KBM-7 (cell line): ENCODE measurements at regions of chr17 and their contacts with region 1.

Region 1: DNA sequence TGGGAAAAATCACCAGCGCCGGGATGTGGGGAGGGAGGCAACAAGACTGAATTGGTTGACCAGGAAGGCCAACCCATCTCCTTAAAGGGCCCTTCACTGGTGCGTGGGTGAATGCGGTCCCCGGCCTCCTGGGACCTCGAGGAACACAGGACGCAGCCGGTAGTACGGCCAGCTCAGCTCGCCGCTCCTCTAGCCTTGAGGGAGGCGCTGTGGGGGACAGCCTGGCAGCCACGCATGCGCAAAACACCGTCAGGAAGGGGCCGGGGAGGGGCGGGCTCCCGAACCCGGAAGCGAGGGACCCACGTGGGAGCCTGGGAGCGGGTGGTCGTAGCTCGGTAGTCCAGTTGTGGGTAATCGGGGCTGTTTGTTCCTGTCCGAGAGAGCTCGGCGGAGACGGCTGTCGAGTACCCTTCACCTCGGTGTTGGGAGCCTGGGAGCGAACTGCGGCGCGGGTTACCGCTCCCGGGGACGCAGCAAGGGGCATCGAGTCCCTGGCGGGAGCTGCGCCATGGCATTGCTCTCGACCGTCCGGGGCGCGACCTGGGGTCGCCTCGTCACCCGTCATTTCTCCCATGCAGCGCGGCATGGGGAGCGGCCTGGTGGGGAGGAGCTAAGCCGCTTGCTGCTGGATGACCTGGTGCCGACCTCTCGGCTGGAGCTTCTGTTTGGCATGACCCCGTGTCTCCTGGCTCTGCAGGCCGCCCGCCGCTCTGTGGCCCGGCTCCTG is at the start of gene MRM1:
- DNase-seq: peak; percentile 95

Region 2: GRCh38 chr17:35764123-35764991 is 837.1 kb before region 1 on chr17:
- in situ Hi-C with region 1: no loop called
- DNase-seq: peak; percentile 95

Region 3: DNA sequence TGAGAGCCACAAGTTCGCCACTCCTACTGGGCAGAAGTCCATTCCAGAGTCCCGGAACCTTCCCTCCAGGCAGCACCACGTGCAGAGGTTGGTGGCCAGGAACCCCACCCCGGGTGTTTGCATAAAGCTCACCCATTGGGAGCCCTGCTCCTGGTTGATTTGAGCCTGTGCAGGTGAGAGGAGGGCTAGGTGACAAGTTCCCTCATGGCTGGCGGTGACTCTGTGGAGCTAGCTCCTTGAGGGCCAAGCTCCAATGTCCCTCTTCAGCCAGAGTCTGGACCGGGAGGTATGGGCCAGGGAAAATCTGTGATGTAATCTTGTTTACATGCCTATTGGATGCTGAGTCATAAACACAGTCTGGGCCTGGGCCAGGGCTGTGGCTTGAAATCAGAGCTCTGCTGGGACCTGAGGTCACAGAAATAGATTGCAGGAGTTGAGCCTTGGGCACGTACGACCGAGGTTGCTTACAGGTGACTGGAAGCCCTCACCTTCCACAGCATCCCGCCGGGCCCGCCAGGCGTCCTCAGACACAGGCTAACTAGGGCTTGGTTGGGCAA is 466.2 kb after region 1 on chr17:
- in situ Hi-C with region 1: loop called (anchors 25 kb)
- DNase-seq: no peak

Region 4: GRCh38 chr17:37239690-37240334 is 638.3 kb after region 1 on chr17:
- in situ Hi-C with region 1: loop called (anchors 25 kb)
- DNase-seq: peak; percentile 39

Region 5: DNA sequence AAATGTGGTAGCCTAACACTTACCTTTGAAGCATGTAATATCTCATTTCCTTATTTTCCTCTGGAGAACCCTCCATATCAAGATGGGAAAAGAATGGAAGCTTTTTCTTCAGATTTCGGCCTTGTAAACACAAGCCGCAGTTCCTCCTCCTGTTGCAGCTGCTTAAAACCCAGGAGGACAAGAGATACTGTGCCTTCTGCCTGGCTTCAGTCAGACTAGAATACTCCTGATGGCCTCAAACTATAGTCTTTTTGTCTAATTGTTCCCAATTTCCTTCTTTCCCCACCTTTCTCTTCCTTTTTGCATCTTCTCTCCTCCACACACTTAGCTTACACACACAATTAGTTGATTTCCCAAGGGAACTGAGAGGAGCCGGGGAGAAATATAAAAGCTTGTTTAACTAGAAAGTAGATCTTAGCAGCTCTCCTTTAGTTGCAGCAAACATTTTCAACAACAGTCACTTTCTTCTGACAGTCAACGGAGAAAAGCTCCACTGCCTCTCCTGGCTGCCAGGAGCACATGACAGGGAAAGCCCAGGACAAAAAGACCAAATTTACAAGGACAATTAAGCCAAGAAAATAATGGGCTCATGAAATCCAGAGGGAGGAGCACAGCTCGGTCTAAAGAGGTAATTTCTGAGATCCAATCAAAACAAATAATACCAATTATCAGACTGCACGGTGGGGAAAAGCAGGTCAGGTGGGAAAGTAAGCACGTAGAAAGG is 698.0 kb after region 1 on chr17:
- in situ Hi-C with region 1: no loop called
- DNase-seq: no peak

Region 6: DNA sequence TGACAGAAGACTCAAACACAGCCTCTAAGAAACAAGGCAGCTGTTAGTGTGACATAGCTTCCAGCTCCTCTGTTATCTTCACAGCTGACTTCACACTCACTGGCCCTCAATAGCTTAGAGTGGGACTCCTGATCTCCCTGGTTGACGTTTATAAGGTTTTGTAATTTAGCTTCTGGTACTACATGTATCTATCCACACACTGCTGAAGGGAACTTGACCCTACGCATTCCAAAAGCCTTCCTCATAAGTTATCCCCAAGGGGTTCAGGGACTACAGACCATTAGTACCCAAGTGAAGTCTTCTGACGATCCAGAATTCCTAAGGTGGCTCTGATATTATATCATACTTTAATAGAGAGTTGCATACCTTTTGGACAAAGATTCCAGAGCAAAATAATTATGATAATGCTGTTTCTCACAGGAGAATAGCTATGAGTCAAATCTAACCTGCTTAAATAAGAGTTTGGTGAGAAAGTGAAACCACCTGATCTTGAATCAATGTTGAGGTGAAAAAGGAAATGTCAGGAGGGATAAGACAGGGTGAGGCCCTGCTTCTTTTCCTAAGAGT is 790.6 kb after region 1 on chr17:
- in situ Hi-C with region 1: loop called (anchors 25 kb)
- DNase-seq: no peak